Activated CD4-positive, alpha-beta T cell treated with anti-CD3 and anti-CD28 coated beads for 36 hours (primary cell): ENCODE measurements at regions of chr18 and their contacts with region 1.

Region 1: DNA sequence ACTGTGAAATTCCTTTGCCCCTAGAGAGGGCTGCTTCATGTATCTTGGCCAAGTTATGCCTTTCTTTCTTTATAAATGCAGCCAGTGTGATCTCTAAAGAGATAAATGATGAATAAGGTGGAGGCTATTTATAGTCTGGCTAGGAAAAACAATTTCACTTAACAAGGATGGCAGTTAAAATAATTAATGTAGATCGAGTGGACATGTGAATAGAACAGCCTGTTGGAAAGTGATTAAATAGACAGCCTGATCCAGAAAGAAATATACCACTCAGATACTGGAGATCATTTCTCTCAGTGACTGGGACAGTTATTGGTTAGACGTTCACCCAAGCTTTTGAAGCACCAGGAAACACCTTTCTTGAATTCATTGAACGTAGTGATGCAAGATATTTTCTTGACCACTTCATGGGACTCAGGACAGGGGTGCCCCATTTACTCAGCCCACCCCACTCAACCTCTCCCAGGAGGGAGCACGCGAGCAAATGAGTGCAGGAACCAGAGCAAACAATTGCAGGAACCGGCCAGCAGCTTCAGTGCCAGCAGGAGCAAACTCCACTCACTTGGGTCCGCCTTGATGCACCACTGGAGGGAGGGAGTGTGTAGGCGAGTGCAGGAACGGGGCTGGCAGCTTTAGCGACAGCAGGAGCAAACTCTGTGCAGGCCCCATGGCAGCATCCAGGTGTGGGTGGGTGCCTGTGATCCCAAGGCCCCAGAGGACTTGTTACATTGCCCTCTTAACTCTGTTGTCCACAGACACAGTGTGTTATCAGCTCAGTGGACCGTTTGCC is 1667.1 kb upstream of the CELF4 start:
- DNase-seq: no peak
- ATAC-seq: no peak
- H3K4me3 Mint-ChIP-seq: no peak overlapping the region
- H3K27ac Mint-ChIP-seq: no peak overlapping the region
- H3K4me1 Mint-ChIP-seq: no peaks in the 10 kb centered on the region
- H3K27me3 Mint-ChIP-seq: no peaks in the 10 kb centered on the region

Region 2: DNA sequence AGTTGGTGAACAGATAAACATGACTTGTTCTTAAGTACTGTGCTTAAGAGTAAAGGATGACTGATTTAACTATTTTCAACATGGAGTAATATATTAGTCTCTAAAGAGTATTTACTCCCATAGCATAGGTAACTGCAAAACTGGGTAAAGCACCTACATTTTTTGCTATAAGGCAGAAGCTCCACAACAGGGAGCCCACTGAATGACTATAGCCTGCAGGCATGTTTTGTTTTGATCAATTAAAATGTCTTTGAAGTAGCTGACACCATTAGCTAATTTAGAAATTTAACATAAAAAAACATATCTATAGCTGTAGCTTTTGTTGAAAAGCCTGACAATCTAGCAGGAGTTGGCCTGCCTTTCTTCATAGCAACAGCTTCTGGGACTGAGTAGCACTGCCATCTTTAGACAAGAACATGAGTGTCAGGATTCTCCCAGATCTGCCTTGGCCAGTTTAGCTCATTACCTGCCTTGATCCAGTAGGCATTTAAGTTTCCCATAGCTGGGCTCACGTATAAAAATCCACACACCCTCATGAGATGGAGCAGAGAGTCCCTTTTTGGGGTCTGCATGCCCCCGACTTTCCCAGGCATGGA is 787.2 kb after region 1 on chr18:
- CTCF ChIA-PET with region 1: no interaction called
- POLR2A ChIA-PET with region 1: interaction called, 11 read pairs
- intact Hi-C with region 1: no loop called
- DNase-seq: no peak
- ATAC-seq: no peak
- H3K4me3 Mint-ChIP-seq: no peak overlapping the region
- H3K27ac Mint-ChIP-seq: no peak overlapping the region
- H3K4me1 Mint-ChIP-seq: no peaks in the 10 kb centered on the region
- H3K27me3 Mint-ChIP-seq: no peaks in the 10 kb centered on the region